CD4-positive, alpha-beta memory T cell (primary cell): ENCODE measurements at regions of chr14 and their contacts with region 1.

Region 1: DNA sequence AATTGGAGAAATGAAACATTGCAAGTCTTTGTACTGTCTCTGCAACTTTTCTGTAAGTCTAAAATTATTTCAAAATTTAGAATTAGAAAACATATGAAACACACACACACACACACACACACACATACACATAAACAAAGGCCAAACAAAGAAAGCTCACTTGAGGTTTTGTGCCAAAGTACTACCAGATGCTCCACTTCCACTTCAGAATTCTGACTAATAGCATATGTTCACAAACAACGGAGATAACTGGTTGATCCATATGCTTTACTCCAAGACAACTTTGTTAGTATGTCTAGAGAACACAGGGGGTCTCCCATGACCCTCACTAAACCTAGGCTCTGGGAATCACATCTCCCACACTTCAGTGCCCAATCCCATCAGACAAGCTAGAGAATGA is 133.8 kb upstream of the CLEC14A start:
- DNase-seq: no peak
- H3K4me3 ChIP-seq: no peak overlapping the region
- H3K4me3 Mint-ChIP-seq: no peak overlapping the region
- H3K27ac ChIP-seq: no peak overlapping the region
- H3K27ac Mint-ChIP-seq: no peak overlapping the region
- H3K4me1 ChIP-seq: no peaks in the 10 kb centered on the region
- H3K4me1 Mint-ChIP-seq: no peaks in the 10 kb centered on the region
- H3K27me3 ChIP-seq: no peaks in the 10 kb centered on the region
- H3K27me3 Mint-ChIP-seq: peaks cover 2 to 5% of the 10 kb centered on the region in 2 donors

Region 2: GRCh38 chr14:38405851-38406635 is 16.4 kb after region 1 on chr14:
- CTCF ChIA-PET with region 1: no interaction called
- POLR2A ChIA-PET with region 1: no interaction called
- intact Hi-C with region 1: no loop called
- DNase-seq: no peak
- H3K4me3 ChIP-seq: no peak overlapping the region
- H3K4me3 Mint-ChIP-seq: no peak overlapping the region
- H3K27ac ChIP-seq: no peak overlapping the region
- H3K27ac Mint-ChIP-seq: no peak overlapping the region
- H3K4me1 ChIP-seq: no peaks in the 10 kb centered on the region
- H3K4me1 Mint-ChIP-seq: no peaks in the 10 kb centered on the region
- H3K27me3 ChIP-seq: no peaks in the 10 kb centered on the region
- H3K27me3 Mint-ChIP-seq: peaks cover 1 to 7% of the 10 kb centered on the region in 2 donors

Region 3: DNA sequence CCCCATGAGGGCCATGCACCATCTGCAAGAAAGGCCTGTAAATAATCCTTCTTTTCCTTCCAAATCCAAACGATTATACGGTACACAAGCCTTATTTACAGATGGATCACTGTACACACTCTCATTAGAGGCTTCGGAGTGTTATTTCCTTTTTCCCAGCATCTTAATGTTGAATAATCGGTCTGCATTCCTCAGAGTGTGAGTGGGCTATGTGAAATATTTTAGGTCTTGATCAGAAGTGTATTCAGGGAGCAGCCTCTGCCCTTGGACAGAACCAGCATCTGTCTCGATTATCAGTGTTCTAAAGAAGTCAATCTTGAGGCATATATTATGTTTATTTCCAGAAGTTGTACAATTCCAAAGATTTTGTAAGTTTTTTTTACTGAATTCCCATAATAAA is 372.7 kb after region 1 on chr14:
- CTCF ChIA-PET with region 1: no interaction called
- POLR2A ChIA-PET with region 1: no interaction called
- intact Hi-C with region 1: loop called (anchors 5 kb)
- DNase-seq: no peak
- H3K4me3 ChIP-seq: no peak overlapping the region
- H3K4me3 Mint-ChIP-seq: no peak overlapping the region
- H3K27ac ChIP-seq: no peak overlapping the region
- H3K27ac Mint-ChIP-seq: no peak overlapping the region
- H3K4me1 ChIP-seq: no peaks in the 10 kb centered on the region
- H3K4me1 Mint-ChIP-seq: peaks cover 0 to 1% (median 0%) of the 10 kb centered on the region in 4 donors
- H3K27me3 ChIP-seq: no peaks in the 10 kb centered on the region
- H3K27me3 Mint-ChIP-seq: no peaks in the 10 kb centered on the region

Region 4: GRCh38 chr14:39203659-39204606 is 814.3 kb after region 1 on chr14:
- CTCF ChIA-PET with region 1: no interaction called
- POLR2A ChIA-PET with region 1: no interaction called
- intact Hi-C with region 1: loop called (anchors 10 kb)
- DNase-seq: no peak
- H3K4me3 ChIP-seq: no peak overlapping the region
- H3K4me3 Mint-ChIP-seq: no peak overlapping the region
- H3K27ac ChIP-seq: no peak overlapping the region
- H3K27ac Mint-ChIP-seq: peak overlapping the region in 1 of 7 donors; percentile 19
- H3K4me1 ChIP-seq: no peaks in the 10 kb centered on the region
- H3K4me1 Mint-ChIP-seq: peaks cover 8 to 25% (median 17%) of the 10 kb centered on the region in 4 donors
- H3K27me3 ChIP-seq: no peaks in the 10 kb centered on the region
- H3K27me3 Mint-ChIP-seq: no peaks in the 10 kb centered on the region